Activated CD8-positive, alpha-beta T cell treated with anti-CD3 and anti-CD28 coated beads, Interleukin-2, amount 10 ng/mL, durations not matched to agents 7 days and 5 days (primary cell): ENCODE measurements at regions of chr21 and their contacts with region 1.

Region 1: DNA sequence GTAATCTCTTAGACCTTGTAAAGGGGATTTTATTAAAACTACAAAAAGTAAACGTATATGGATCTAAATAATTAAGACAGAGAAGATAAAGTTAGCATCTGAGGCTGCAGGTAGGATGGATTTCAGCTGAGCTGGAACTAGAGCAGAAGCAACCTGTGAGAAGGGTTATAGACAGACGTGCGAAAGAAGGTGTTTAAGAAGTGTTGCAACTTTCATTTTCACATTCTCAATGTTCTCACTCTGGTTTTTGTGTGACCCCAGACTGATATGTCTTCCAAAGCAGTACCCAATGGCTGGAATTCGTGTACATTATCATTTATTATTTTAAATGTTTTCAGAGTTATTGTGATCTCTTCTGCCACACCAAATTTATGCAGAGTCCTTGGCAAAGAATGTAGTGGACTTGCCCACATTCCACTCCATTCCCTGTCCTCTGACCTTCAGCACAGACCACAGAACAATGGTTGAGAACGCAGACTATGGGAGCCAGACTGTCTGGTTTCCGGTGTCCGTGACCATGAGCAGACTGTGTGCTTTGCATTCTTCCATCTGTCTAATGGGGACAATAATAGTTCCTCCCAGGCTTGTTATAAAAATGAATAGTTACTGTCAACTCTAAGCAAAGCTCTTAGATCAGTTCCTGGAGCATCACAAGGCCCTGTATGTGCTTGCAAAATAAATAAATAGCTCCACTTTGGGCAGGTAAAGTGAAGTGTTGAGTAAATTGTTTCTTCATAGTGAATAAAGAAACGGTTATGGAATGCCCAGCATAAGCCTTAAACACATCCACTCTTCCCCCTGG is 140.6 kb upstream of the SAMSN1 start:
- DNase-seq: no peak
- ATAC-seq: peak; percentile 64
- H3K4me3 Mint-ChIP-seq: peak overlapping the region; percentile 15
- H3K27ac Mint-ChIP-seq: peak overlapping the region; percentile 45
- H3K4me1 Mint-ChIP-seq: peaks cover 41% of the 10 kb centered on the region
- H3K27me3 Mint-ChIP-seq: no peaks in the 10 kb centered on the region

Region 2: DNA sequence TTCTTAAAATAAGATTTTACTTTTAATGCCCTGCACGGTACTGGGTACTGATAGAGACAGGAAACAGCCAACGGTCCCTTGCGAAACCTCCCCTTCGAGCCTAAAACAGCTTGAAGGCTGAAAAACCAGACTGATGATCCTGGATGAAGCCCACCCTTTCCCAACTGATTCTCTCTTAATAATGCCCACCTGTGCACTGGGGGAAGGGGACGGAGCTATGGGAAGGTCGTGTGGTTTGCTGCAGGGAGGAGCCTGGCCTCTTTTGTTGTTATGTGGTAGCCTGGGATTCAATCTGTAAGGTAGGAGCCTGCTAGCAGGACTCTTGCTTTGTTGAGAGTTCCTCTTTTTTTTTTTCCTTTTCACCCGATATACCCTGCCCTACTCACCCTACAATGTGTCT is 166.1 kb before region 1 on chr21:
- CTCF ChIA-PET with region 1: no interaction called
- POLR2A ChIA-PET with region 1: no interaction called
- DNase-seq: no peak
- ATAC-seq: no peak
- H3K4me3 Mint-ChIP-seq: no peak overlapping the region
- H3K27ac Mint-ChIP-seq: peak overlapping the region; percentile 77
- H3K4me1 Mint-ChIP-seq: peaks cover 63% of the 10 kb centered on the region
- H3K27me3 Mint-ChIP-seq: no peaks in the 10 kb centered on the region

Region 3: DNA sequence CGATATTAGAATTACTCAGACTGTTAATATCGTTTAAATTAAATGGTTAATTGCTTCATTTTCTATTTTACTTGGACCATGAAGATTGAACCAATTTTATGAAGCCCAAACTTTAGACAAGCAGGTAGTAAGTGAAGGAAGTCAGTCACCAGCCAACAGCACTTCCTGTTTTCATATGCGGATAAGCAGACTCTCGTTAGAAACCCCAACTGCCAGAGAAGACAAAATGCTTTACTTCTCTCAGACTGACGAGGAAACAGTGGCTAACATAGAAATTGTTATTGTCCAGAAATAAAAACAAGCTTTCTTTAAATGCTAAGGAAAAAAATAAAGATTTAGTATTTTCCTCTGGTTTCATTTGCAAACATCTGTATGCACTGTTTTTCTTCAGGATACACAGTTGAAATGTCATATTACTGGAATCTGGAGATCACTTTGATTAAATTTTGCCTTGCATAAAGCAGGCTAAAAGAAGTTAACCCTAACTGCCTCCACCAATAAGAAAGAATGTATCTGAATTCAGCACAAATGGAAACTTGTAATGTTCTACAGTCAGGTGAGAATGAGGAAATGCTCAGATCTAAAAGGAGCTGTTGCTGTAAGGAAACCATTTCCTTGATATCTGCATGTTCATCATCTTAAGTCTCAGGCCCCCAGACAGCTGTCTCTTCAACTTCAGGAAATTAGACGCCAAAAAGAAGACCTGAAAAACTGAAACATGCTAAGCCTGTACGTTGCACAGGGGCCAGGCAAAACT is 10.7 kb before region 1 on chr21:
- CTCF ChIA-PET with region 1: interaction called, 10 read pairs
- POLR2A ChIA-PET with region 1: no interaction called
- DNase-seq: peak; percentile 53
- ATAC-seq: peak; percentile 91
- H3K4me3 Mint-ChIP-seq: peak overlapping the region; percentile 60
- H3K27ac Mint-ChIP-seq: peak overlapping the region; percentile 94
- H3K4me1 Mint-ChIP-seq: peaks cover 44% of the 10 kb centered on the region
- H3K27me3 Mint-ChIP-seq: no peaks in the 10 kb centered on the region